ENCODE measurements at regions of chr6 and their contacts with region 1.

Region 1: GRCh38 chr6:159008656-159009288 is 8.8 kb upstream of the RSPH3 start:
- DNase-seq: no peak
- H3K4me3 Mint-ChIP-seq: no peak overlapping the region
- H3K27ac Mint-ChIP-seq: no peak overlapping the region
- H3K4me1 Mint-ChIP-seq: no peaks in the 10 kb centered on the region
- H3K27me3 Mint-ChIP-seq: no peaks in the 10 kb centered on the region
- CTCF ChIP-seq: no peak

Region 2: GRCh38 chr6:158926416-158926815 is 82.4 kb before region 1 on chr6:
- CTCF ChIA-PET with region 1: no interaction called
- intact Hi-C with region 1: no loop called
- DNase-seq: no peak
- H3K4me3 Mint-ChIP-seq: no peak overlapping the region
- H3K27ac Mint-ChIP-seq: no peak overlapping the region
- H3K4me1 Mint-ChIP-seq: no peaks in the 10 kb centered on the region
- H3K27me3 Mint-ChIP-seq: no peaks in the 10 kb centered on the region
- CTCF ChIP-seq: no peak

Region 3: DNA sequence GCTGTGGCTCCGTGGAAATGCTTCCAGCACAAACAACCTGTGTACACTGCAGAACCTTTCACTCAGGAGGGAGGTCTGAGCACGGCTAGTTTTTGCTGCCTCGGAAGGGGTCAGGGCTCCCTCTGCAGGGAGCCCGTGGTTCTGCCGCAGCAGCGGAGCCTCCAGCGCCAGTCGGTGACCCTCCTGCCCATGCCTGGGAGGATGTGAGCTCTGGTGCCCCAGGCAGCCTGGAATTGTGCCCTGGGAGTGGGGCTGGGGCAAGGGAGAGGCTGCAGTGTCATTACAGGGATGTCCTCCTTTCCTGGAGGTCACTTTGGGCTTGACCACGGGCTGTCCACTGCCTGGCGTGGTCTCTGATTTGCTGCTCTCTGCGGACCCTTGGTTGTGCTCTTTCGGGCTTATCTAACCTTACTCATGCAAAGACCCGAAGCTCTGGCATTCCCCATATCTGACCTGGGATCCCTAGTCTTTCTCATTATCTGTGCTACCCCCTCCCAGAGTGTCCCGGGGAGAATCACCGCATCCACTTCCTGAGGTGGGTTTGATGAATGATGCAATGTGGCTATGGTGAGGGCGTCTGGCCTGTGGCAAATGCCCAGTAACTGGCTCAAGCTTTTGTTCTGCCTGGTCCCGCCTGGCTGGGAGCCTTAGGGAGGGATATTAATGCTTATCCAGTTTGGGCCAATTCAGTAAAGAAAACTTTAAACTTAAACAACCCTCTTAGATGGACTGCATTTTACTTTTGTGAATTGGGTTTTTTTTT is 95.6 kb after region 1 on chr6:
- CTCF ChIA-PET with region 1: interaction called, 11 read pairs
- intact Hi-C with region 1: loop called (anchors 1 kb)
- DNase-seq: peak; percentile 75
- H3K4me3 Mint-ChIP-seq: no peak overlapping the region
- H3K27ac Mint-ChIP-seq: no peak overlapping the region
- H3K4me1 Mint-ChIP-seq: peaks cover 36% of the 10 kb centered on the region
- H3K27me3 Mint-ChIP-seq: peaks cover 34% of the 10 kb centered on the region
- CTCF ChIP-seq: peak; percentile 77

Region 4: DNA sequence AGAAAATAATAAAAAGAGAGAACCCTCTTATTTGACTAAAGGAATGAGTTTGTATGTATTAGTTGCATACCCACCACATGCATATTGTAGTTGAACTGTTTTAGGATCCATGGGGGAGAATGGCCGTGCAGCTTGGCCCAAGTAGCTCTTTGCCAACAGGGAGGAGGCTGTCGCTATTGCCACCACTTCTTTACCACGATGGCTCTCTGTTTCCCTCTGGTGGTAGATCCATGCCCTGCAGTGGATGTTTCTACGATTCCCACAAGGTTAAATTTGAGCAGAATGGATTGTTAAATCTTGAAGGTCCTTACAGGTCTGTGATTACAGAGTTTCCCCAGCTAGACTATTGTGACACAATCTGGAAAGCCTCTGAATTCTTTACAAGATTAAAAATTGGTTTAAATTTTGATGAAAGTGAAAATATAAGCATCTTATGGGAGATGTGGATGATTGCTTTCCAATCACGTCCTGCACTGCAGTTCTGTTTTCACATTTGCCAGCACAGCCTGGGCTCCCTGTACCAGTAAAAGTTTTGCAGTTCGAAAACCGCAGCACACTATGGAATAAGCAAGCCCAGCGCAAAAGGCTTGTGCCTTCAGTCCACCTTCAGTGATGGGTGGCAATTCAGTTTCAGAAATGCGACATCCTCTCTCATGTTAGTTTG is 126.1 kb after region 1 on chr6:
- CTCF ChIA-PET with region 1: interaction called, 45 read pairs
- intact Hi-C with region 1: loop called (anchors 1 kb)
- DNase-seq: peak; percentile 80
- H3K4me3 Mint-ChIP-seq: no peak overlapping the region
- H3K27ac Mint-ChIP-seq: no peak overlapping the region
- H3K4me1 Mint-ChIP-seq: peaks cover 12% of the 10 kb centered on the region
- H3K27me3 Mint-ChIP-seq: peaks cover 85% of the 10 kb centered on the region
- CTCF ChIP-seq: peak; percentile 69

Measured in Calu3 (cell line).